Posterior vena cava (tissue), 2 donors: ENCODE measurements at regions of chr3 and their contacts with region 1.

Region 1: DNA sequence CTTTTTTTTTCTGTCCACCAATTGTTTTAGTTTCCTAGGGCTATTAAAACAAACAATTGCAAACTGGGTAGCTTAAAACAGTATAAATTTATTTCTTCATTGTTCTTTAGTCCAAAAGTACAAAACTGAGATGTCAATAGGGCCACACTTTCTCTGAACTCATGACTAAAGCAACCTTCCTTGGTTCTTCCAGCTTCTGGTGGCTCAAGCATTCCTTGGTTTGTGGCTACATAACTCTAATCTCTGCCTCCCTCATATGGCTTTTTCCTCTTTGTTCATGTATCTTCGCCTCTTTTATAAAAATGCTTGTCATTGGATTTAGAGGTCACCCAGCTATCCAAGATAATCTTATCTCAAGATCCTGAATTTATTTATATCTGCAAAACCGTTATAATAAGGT is 914.5 kb upstream of the EPHA6 start:
- DNase-seq: no peak

Region 2: GRCh38 chr3:95120921-95121320 is 779.0 kb before region 1 on chr3:
- intact Hi-C with region 1: loop called in 1 of 2 experiments (anchors 10 kb)
- DNase-seq: no peak

Region 3: GRCh38 chr3:95939235-95939809 is 39.4 kb after region 1 on chr3:
- intact Hi-C with region 1: no loop called
- DNase-seq: no peak